ENCODE measurements at regions of chr5 and their contacts with region 1.

Region 1: DNA sequence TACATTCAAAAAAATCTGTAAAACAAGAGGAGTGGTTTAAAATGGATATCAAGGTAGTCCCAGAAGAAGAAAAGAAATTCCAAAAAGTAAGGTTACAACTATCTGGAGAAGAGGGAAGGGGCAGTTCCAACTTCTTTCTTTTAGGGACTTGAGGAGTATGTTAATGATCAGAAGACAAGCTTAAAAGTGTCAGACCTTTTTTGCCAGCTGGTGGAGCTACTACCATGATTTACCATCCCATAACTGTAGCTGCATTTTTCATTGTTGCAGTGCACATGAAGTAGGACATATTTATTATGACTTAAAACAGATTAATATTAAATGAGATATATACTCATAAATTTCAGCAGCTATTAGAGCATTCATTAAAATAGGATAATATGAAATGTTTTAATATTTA is 158.5 kb upstream of the RGS7BP start:
- DNase-seq: no peak
- H3K4me3 ChIP-seq: no peak overlapping the region
- H3K27ac ChIP-seq: no peak overlapping the region
- H3K4me1 ChIP-seq: no peaks in the 10 kb centered on the region
- H3K27me3 ChIP-seq: no peaks in the 10 kb centered on the region
- CTCF ChIP-seq: peak in 1 of 2 donors; percentile 32

Region 2: DNA sequence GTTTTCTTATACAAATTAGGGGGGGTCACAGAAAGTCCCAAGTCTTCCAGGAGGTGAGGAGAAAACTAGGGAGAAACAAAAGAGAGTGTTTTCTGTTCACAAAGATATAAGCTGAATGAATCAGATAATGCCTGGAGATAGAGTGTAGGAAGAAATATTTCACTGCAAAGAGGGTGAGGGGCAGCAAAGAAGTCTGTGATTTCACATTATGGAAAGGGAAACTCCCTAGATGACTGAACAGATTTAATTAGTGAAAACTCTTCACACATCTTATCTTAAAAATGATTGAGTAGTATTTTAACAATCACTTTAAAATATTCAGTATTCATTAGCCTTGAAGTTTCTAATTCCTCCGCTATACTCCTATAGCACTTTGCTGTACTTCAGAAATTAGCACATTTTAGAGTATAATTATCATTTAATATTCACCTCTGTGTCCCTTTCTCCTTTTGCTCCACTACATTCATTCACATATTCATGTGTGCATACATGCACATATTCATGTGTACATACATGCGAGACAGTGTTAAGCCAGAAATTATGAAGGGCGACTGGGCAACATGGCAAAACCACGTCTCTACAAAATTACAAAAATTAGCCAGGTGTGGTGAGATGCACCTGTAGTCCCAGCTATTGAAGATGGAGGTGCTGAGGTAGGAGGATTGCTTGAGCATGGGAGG is 717.2 kb before region 1 on chr5:
- CTCF ChIA-PET with region 1: no interaction called
- dilution Hi-C with region 1: no loop called
- in situ Hi-C with region 1: no loop called
- intact Hi-C with region 1: loop called (anchors 10 kb)
- DNase-seq: no peak
- H3K4me3 ChIP-seq: no peak overlapping the region
- H3K27ac ChIP-seq: no peak overlapping the region
- H3K4me1 ChIP-seq: no peaks in the 10 kb centered on the region
- H3K27me3 ChIP-seq: no peaks in the 10 kb centered on the region
- CTCF ChIP-seq: no peak

Region 3: GRCh38 chr5:64612344-64612961 is 265.1 kb after region 1 on chr5:
- CTCF ChIA-PET with region 1: interaction called, 3 read pairs
- dilution Hi-C with region 1: no loop called
- in situ Hi-C with region 1: no loop called
- intact Hi-C with region 1: loop called (anchors 1 kb)
- DNase-seq: peak; percentile 56
- H3K4me3 ChIP-seq: no peak overlapping the region
- H3K27ac ChIP-seq: no peak overlapping the region
- H3K4me1 ChIP-seq: no peaks in the 10 kb centered on the region
- H3K27me3 ChIP-seq: peaks cover 6% of the 10 kb centered on the region
- CTCF ChIP-seq: peak; percentile 69 to 87

Measured in mammary epithelial cell (primary cell).